ENCODE measurements at regions of chr16 and their contacts with region 1.

Region 1: GRCh38 chr16:9203926-9204325 is 112.5 kb downstream of the HAPSTR1 start:
- DNase-seq: no peak
- ATAC-seq: no peak
- H3K4me3 ChIP-seq: no peak overlapping the region
- H3K27ac ChIP-seq: no peak overlapping the region
- H3K4me1 ChIP-seq: peaks cover 0 to 9% (median 4%) of the 10 kb centered on the region in 9 donors
- H3K27me3 ChIP-seq: no peaks in the 10 kb centered on the region
- CTCF ChIP-seq: no peak

Region 2: GRCh38 chr16:9225611-9226316 is 21.8 kb after region 1 on chr16:
- intact Hi-C with region 1: loop called in 1 of 10 experiments (anchors 2 kb)
- DNase-seq: no peak
- ATAC-seq: no peak
- H3K4me3 ChIP-seq: no peak overlapping the region
- H3K27ac ChIP-seq: no peak overlapping the region
- H3K4me1 ChIP-seq: no peaks in the 10 kb centered on the region
- H3K27me3 ChIP-seq: peaks cover 0 to 17% (median 0%) of the 10 kb centered on the region in 7 donors
- CTCF ChIP-seq: peak in 4 of 9 donors; percentile 11 to 29 (median 20)